ENCODE measurements at regions of chr12 and their contacts with region 1.

Region 1: GRCh38 chr12:17108877-17109541 is 503.0 kb upstream of the LMO3 start:
- DNase-seq: no peak
- ATAC-seq: no peak
- H3K4me3 ChIP-seq: no peak overlapping the region
- H3K27ac ChIP-seq: no peak overlapping the region
- H3K4me1 ChIP-seq: no peaks in the 10 kb centered on the region
- H3K27me3 ChIP-seq: no peaks in the 10 kb centered on the region
- CTCF ChIP-seq: no peak

Region 2: DNA sequence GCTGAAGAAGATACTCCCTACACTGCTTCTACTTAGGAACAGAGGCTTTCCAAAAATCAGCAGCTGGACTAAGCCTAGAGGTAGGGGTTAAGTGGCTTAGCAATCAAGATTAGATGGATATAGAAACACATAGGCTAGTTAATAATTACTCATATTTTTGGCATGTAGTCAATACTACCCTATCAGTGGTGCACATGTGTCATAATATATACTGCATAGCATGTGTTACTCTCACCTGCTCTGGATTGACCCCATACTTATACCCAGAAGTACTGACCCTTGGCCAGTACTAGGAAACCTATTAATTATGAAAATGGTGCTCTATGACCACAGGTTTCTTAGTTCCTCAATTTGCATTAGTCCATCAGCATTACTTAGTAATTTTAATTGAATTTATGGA is 25.3 kb after region 1 on chr12:
- intact Hi-C with region 1: loop called in 1 of 10 experiments (anchors 1 kb)
- DNase-seq: no peak
- ATAC-seq: no peak
- H3K4me3 ChIP-seq: no peak overlapping the region
- H3K27ac ChIP-seq: no peak overlapping the region
- H3K4me1 ChIP-seq: no peaks in the 10 kb centered on the region
- H3K27me3 ChIP-seq: no peaks in the 10 kb centered on the region
- CTCF ChIP-seq: no peak

Region 3: DNA sequence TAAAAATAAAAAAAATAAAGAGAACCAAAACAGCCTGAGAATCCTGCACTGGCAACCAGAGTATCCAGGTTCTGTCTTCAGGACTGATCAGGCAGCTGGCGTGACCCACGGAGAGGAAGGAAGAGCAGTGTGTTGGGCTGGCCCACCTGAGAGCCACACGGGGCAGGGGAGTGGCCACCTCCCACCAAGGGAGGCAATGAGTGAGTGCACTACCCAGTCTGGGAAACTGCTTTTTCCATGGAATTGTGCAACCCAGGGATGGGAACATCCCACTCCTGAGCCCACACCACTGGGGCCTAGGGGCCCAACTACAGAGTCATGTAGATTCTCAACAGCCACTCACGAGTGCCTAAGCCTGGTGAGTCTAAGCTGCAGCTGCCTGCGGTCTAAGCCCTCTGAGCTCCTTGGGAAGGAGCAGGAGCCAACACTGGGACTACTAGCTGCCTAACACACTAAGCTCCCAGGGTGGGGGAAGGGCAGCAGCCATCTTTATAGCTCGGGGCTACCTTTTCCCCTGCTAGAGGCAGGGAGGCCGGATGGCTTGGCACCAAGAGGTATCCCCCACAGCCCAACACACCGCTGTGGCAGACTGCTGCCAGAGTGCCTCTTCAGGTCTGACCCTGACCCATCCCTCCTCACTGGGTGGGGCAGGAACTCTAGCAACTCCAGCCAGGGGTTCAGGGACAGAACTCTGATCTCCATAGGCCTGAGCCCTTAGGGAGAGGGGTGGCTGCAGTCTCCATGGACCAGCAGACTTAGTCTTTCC is 370.1 kb after region 1 on chr12:
- intact Hi-C with region 1: no loop called
- DNase-seq: no peak
- ATAC-seq: no peak
- H3K4me3 ChIP-seq: no peak overlapping the region
- H3K27ac ChIP-seq: no peak overlapping the region
- H3K4me1 ChIP-seq: no peaks in the 10 kb centered on the region
- H3K27me3 ChIP-seq: no peaks in the 10 kb centered on the region
- CTCF ChIP-seq: no peak